ENCODE measurements at regions of chr2 and their contacts with region 1.

Region 1: DNA sequence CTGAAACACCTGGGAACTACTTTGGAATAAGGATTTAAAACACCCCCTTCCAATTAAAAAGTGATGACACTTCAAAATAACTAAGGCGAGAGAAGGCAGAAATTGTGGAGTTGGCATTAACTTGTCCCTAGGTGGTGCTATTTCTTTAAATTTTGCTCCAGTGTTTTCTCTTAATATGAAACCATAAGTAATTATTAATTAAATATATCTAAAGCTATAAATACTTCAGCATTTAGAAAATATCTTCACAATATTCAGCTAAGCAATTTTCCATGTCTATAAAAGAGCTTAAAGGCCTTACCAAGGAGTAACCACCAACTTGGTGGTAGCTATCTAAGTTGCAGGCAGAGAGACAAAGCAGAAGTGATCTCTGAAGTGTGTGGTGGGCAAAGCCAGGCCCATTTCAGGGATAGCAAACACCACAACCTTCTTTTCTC is 186.8 kb upstream of the PGAP1 start:
- DNase-seq: no peak
- H3K4me3 ChIP-seq: no peak overlapping the region
- CTCF ChIP-seq: no peak

Region 2: DNA sequence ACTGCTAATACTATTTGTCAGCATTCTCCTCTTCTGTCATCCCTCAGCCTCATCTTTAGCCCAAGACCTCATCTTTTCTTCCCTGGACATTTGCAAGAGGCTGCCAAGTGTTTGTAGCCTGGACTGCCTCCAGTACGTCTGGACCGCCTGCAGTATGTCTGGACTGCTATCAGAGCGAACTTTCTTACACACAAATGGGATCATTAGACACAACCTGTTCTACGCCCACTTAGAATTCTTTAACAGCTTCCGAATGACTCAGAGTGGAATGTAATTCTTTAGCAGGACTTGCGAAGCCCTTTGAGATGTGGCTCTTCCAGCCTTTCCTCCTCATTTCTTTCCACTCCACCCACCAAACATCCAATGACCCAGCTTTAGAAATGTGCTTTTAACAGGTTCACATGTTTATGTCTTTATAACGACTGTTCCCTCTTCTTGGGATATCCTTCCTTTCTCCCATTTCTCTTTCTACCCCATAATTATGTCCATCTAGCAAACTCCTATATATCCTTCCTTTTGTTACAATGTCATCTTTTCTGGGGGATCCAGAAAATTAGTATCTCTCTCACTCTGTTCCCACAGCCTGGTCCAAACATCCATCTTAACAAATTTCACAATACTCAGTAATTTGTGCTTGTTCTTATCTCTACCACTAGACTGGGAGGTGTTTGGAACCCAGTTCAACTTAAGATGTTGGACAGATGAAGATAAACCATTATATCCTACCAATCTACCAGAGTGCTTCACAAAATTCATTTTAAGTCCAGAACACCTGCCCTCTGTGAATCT is 15.5 kb before region 1 on chr2:
- CTCF ChIA-PET with region 1: interaction called, 33 read pairs
- POLR2A ChIA-PET with region 1: no interaction called
- DNase-seq: no peak
- H3K4me3 ChIP-seq: no peak overlapping the region
- CTCF ChIP-seq: no peak

Region 3: GRCh38 chr2:197145471-197146138 is 32.3 kb after region 1 on chr2:
- CTCF ChIA-PET with region 1: interaction called, 13 read pairs
- POLR2A ChIA-PET with region 1: no interaction called
- DNase-seq: no peak
- H3K4me3 ChIP-seq: no peak overlapping the region
- CTCF ChIP-seq: no peak

Region 4: DNA sequence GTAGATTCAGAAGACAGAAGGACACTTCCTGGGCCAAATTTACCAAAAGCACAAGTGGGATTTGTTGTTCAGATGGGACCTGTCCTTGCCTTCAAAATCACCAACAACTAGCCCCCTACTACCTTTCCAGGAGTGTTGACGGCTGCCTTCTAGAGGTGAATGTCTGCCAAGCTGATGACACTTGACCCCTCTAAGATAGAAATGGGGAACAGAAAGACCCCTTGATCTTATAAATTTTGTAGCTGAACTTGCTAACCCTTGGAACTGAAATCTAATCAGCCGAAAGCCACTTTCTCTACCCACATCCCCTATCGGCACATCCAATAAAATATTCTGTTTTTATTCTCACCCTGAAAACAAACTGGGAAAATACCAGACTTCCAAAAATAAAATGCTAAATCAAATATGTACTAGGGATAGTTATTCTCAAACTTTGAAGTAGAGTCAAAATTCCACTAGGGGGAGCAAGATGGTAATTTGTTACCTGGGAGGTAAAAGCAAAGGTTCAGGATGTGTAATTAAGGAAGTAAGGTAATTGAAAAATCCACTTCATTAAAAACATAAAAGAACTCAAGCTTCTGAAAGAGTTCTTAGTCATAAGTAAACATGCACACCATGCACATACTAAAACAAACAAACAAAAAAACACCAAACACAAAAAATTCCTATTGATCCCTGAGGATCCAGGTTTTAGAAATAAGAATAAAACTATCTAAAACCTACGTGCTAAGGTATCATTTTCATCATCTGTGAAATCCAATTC is 78.1 kb after region 1 on chr2:
- CTCF ChIA-PET with region 1: interaction called, 30 read pairs
- POLR2A ChIA-PET with region 1: no interaction called
- DNase-seq: no peak
- H3K4me3 ChIP-seq: no peak overlapping the region
- CTCF ChIP-seq: peak; percentile 40

Region 5: DNA sequence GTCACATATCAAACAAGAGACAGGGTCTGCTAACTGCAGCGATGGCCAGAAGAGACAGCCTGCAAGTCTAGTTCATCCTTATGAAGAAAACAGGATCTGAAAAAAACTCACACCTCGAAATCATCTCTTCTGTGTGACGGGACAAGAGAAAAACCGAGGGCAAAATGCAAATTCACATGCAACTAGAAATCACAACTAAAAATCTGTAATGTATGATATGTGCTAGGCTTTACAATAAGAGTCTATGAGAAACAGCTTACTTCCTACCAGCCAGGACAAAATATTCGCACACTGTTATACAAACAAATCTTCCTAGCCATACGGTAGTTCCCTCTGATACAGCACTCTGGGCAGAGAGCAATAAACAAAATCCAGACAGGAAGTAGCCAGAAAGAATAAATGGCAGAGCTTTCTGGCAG is 148.5 kb after region 1 on chr2:
- CTCF ChIA-PET with region 1: no interaction called
- POLR2A ChIA-PET with region 1: no interaction called
- DNase-seq: no peak
- H3K4me3 ChIP-seq: no peak overlapping the region
- CTCF ChIP-seq: no peak

Region 6: GRCh38 chr2:197322724-197323720 is 209.7 kb after region 1 on chr2:
- CTCF ChIA-PET with region 1: interaction called, 11 read pairs
- POLR2A ChIA-PET with region 1: no interaction called
- DNase-seq: no peak
- H3K4me3 ChIP-seq: no peak overlapping the region
- CTCF ChIP-seq: no peak

Region 7: DNA sequence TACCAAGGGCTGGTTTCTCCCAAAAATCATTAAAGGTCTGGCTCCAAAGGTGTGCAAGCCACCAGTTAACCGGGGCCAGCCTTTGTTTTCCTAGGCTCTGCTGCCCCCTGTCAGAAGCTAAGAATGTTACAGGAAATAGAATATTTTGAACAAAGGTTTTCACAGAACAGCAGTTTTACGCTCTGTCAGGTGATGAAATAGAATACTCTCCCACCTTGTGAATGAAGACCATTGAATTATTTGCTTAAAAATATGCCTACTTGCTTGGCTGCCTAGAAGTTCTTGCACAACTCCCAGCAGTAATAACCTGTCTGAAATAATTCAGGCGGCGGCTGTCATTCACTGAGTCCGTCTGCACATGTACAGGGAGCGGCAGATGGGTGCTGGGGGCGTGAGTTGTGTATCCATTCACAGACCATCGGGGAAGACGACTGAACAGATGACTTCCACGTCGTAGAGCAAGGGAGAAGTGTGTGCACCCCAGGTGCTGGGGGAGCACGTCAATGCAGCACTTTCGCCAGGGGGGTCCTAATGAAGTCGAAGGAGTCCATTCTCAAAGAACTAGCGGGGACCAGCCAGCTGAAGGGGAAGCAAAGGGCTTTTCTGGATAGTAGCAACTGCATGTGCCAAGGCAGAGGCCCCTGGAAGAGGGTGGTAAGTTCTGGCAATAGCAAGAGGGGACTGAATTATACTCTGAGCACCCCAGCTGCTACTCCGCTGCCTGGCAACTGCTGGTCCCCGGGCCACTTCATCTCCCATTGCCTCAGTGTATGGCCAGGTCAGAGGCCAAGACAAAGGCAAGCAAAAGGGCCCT is 265.4 kb after region 1 on chr2:
- CTCF ChIA-PET with region 1: interaction called, 51 read pairs
- POLR2A ChIA-PET with region 1: no interaction called
- DNase-seq: no peak
- H3K4me3 ChIP-seq: peak overlapping the region; percentile 33; the same call in 1 of the 2 replicates
- CTCF ChIP-seq: peak; percentile 65

Measured in AG04449 (cell line).